GM10248 (cell line): ENCODE measurements at regions of chr17 and their contacts with region 1.

Region 1: GRCh38 chr17:49707608-49708514 is at the start of gene SLC35B1:
- DNase-seq: peak; percentile 99
- CTCF ChIP-seq: peak; percentile 94

Region 2: GRCh38 chr17:49677933-49678847 is 29.7 kb before region 1 on chr17 and contains the start of gene SPOP:
- CTCF ChIA-PET with region 1: interaction called, 14 read pairs
- POLR2A ChIA-PET with region 1: no interaction called
- DNase-seq: peak; percentile 98
- CTCF ChIP-seq: no peak

Region 3: DNA sequence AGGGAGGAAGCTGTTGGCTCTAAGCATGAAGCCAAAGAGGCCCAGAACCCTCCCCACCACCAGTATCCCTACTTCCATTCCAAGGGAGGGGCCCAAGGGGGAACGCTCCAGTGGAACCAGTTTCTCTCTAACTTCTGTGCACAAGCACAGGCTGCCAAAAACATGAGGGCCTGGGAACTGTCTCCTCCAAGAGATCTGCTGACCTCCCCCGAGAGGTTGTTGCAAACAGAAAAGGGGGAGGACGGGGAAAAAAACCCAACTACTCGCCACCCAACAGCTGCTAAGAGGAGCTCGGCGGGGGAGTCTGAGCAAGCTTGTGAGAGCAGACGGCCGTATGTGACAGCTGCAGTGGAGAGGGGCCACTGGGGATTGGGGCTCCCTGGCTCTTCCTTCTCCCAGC is 15.6 kb after region 1 on chr17:
- CTCF ChIA-PET with region 1: interaction called, 33 read pairs
- POLR2A ChIA-PET with region 1: no interaction called
- DNase-seq: no peak
- CTCF ChIP-seq: no peak

Region 4: GRCh38 chr17:49739641-49740271 is 31.9 kb after region 1 on chr17:
- CTCF ChIA-PET with region 1: interaction called, 27 read pairs
- POLR2A ChIA-PET with region 1: no interaction called
- DNase-seq: peak; percentile 63
- CTCF ChIP-seq: no peak

Region 5: DNA sequence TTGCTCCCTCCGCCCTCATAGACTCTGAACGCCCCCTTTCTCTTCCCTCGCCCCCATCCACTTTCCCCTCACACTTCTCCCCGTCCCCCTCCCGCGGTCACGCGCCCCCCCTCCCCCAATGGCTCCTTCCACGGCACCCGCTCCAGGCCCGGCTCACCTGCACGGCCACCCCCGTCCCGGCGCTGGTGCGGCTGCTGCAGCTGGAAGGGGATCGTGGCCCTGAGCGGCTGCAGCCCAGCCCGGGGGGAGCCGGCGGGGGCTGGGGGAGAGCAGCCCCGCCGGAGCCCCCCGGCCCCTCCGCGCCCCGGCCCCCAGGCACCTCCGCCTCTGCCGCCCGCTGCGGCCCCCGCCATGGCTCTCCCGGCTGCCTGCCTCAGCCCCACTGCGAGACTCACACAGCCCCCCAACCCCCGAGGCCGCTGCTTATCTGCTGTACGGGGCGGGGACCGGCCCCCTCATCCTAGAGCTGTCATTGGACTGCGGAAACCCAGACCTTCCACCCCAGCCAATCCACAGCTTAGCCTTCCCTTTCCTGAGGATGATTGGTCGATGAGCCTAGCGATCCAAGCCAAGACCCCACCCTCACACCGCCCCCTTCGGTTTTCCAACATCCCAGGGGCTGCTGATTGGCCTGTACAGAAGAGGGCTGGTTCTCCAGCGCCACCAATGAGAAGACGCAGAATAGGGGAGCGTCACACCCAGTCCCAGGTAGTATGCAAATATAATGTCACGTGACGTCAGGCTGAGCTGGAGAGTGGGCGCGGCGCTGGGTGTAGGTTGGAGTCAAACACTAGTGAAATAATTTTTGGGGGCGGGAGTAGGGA is 56.1 kb after region 1 on chr17 and contains the start of gene FAM117A:
- CTCF ChIA-PET with region 1: interaction called, 26 read pairs
- POLR2A ChIA-PET with region 1: interaction called, 12 read pairs
- DNase-seq: peak; percentile 99
- CTCF ChIP-seq: no peak